ENCODE measurements at regions of chr20 and their contacts with region 1.

Region 1: GRCh38 chr20:38057351-38057972 is 23.9 kb downstream of the RPRD1B start:
- DNase-seq: peak; percentile 77
- H3K4me3 Mint-ChIP-seq: no peak overlapping the region
- H3K27ac Mint-ChIP-seq: peak overlapping the region; percentile 32
- H3K4me1 Mint-ChIP-seq: peaks cover 26% of the 10 kb centered on the region
- H3K27me3 Mint-ChIP-seq: no peaks in the 10 kb centered on the region

Region 2: GRCh38 chr20:37932900-37933299 is 124.6 kb before region 1 on chr20:
- CTCF ChIA-PET with region 1: no interaction called
- POLR2A ChIA-PET with region 1: no interaction called
- DNase-seq: no peak
- H3K4me3 Mint-ChIP-seq: no peak overlapping the region
- H3K27ac Mint-ChIP-seq: no peak overlapping the region
- H3K4me1 Mint-ChIP-seq: no peaks in the 10 kb centered on the region
- H3K27me3 Mint-ChIP-seq: peaks cover 11% of the 10 kb centered on the region

Region 3: GRCh38 chr20:38043512-38044300 is 13.8 kb before region 1 on chr20:
- CTCF ChIA-PET with region 1: interaction called, 10 read pairs
- POLR2A ChIA-PET with region 1: no interaction called
- DNase-seq: no peak
- H3K4me3 Mint-ChIP-seq: no peak overlapping the region
- H3K27ac Mint-ChIP-seq: no peak overlapping the region
- H3K4me1 Mint-ChIP-seq: peaks cover 15% of the 10 kb centered on the region
- H3K27me3 Mint-ChIP-seq: no peaks in the 10 kb centered on the region

Region 4: DNA sequence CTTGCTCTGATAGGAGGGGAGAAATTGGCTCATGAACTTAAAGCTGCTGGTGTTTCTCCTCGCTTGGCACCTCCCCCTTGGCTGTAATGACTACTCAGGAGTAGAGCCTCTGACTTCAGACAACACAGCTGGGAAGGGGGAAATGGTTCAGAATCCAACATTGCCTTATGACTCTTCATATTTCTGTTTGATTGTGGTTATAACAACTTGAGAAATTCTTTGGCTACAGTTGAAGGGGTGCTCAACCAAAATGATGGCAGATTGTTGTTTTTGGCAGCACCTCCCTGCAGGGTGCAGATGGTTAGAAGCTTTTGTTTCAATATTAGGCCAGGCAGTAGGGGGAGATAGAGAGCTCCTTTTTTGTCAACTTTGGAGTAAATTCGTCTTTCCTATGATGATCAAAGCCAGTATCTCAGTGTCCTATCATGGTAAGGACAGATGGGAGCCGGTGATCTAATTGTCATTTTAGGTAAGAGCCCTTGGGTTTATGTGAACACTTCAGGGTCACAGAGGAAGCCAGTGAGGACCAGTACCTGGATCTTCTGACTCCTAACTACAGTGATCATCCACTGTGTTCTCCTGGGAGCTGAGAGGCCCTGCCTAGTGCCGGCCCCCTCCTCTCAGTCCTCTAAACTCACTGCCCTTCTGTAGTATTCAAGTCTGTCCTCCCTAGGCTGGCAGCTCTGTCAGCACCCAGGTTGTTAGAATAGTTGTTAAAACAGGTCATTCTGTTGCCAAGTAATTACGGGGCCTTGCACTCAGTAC is 16.0 kb after region 1 on chr20:
- CTCF ChIA-PET with region 1: interaction called, 12 read pairs
- POLR2A ChIA-PET with region 1: no interaction called
- DNase-seq: no peak
- H3K4me3 Mint-ChIP-seq: no peak overlapping the region
- H3K27ac Mint-ChIP-seq: no peak overlapping the region
- H3K4me1 Mint-ChIP-seq: no peaks in the 10 kb centered on the region
- H3K27me3 Mint-ChIP-seq: no peaks in the 10 kb centered on the region

Measured in activated CD4-positive, alpha-beta memory T cell treated with anti-CD3 and anti-CD28 coated beads, Interleukin-2, amount 10 ng/mL, durations not matched to agents 7 days and 5 days (primary cell).